CD4-positive, alpha-beta memory T cell (primary cell): ENCODE measurements at regions of chr20 and their contacts with region 1.

Region 1: DNA sequence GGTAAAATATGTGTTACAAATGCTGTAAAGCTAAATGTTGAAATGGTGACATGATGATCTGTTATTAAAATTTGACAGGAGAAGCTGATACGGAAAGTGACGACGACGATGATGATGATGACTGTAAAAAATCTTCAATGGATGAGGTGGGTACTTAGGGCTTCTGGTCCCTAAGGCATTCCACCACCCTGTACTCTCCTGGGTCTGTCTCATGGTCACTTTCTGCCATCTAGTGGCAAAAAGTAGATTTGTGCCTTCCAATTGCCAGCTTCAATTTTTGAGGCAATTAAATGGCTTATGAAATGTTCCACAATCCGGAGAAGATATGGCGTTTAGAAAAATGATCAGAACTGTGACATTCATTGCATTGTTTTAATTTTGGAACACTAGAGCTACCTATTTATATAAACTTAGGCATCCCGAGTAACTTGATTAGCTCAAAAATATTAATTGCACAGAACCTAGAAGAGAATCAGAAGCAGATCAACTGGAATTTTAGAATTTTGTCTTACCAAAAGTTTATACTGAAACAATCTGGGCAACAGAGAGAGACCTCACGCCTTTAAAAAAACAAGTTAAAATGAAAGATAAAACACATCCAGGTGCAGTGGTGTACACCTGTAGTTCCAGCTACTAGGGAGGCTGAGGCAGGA is 346.5 kb upstream of the PLCB4 start:
- DNase-seq: peak; percentile 26 to 41 (median 34)
- H3K4me3 ChIP-seq: no peak overlapping the region
- H3K4me3 Mint-ChIP-seq: no peak overlapping the region
- H3K27ac ChIP-seq: no peak overlapping the region
- H3K27ac Mint-ChIP-seq: no peak overlapping the region
- H3K4me1 ChIP-seq: no peaks in the 10 kb centered on the region
- H3K4me1 Mint-ChIP-seq: no peaks in the 10 kb centered on the region
- H3K27me3 ChIP-seq: no peaks in the 10 kb centered on the region
- H3K27me3 Mint-ChIP-seq: no peaks in the 10 kb centered on the region

Region 2: GRCh38 chr20:6828794-6829423 is 1893.5 kb before region 1 on chr20:
- CTCF ChIA-PET with region 1: interaction called, 4 read pairs
- POLR2A ChIA-PET with region 1: no interaction called
- intact Hi-C with region 1: loop called (anchors 5 kb)
- DNase-seq: peak in 1 of 5 donors; percentile 3
- H3K4me3 ChIP-seq: no peak overlapping the region
- H3K4me3 Mint-ChIP-seq: no peak overlapping the region
- H3K27ac ChIP-seq: no peak overlapping the region
- H3K27ac Mint-ChIP-seq: no peak overlapping the region
- H3K4me1 ChIP-seq: no peaks in the 10 kb centered on the region
- H3K4me1 Mint-ChIP-seq: no peaks in the 10 kb centered on the region
- H3K27me3 ChIP-seq: no peaks in the 10 kb centered on the region
- H3K27me3 Mint-ChIP-seq: no peaks in the 10 kb centered on the region

Region 3: GRCh38 chr20:7980332-7981046 is 741.9 kb before region 1 on chr20:
- CTCF ChIA-PET with region 1: interaction called, 11 read pairs
- POLR2A ChIA-PET with region 1: no interaction called
- intact Hi-C with region 1: loop called (anchors 2 kb)
- DNase-seq: peak in 3 of 5 donors; percentile 2 to 8 (median 2)
- H3K4me3 ChIP-seq: no peak overlapping the region
- H3K4me3 Mint-ChIP-seq: no peak overlapping the region
- H3K27ac ChIP-seq: no peak overlapping the region
- H3K27ac Mint-ChIP-seq: peak overlapping the region in 6 of 7 donors; percentile 0 to 86 (median 43)
- H3K4me1 ChIP-seq: no peaks in the 10 kb centered on the region
- H3K4me1 Mint-ChIP-seq: peaks cover 12 to 23% (median 16%) of the 10 kb centered on the region in 4 donors
- H3K27me3 ChIP-seq: no peaks in the 10 kb centered on the region
- H3K27me3 Mint-ChIP-seq: no peaks in the 10 kb centered on the region

Region 4: GRCh38 chr20:8043687-8044282 is 678.6 kb before region 1 on chr20:
- CTCF ChIA-PET with region 1: interaction called, 52 read pairs
- POLR2A ChIA-PET with region 1: interaction called, 4 read pairs
- intact Hi-C with region 1: loop called (anchors 1 kb)
- DNase-seq: peak; percentile 37 to 70 (median 67)
- H3K4me3 ChIP-seq: no peak overlapping the region
- H3K4me3 Mint-ChIP-seq: peak overlapping the region in 1 of 8 donors; percentile 61
- H3K27ac ChIP-seq: no peak overlapping the region
- H3K27ac Mint-ChIP-seq: no peak overlapping the region
- H3K4me1 ChIP-seq: no peaks in the 10 kb centered on the region
- H3K4me1 Mint-ChIP-seq: peaks cover 0 to 4% (median 3%) of the 10 kb centered on the region in 4 donors
- H3K27me3 ChIP-seq: no peaks in the 10 kb centered on the region
- H3K27me3 Mint-ChIP-seq: peaks cover 9 to 11% of the 10 kb centered on the region in 2 donors

Region 5: GRCh38 chr20:8305449-8305978 is 416.9 kb before region 1 on chr20:
- CTCF ChIA-PET with region 1: no interaction called
- POLR2A ChIA-PET with region 1: no interaction called
- intact Hi-C with region 1: loop called (anchors 5 kb)
- DNase-seq: peak; percentile 71 to 79 (median 73)
- H3K4me3 ChIP-seq: no peak overlapping the region
- H3K4me3 Mint-ChIP-seq: peak overlapping the region in 3 of 8 donors; percentile 1 to 31 (median 13)
- H3K27ac ChIP-seq: no peak overlapping the region
- H3K27ac Mint-ChIP-seq: peak overlapping the region in 5 of 7 donors; percentile 3 to 67 (median 47)
- H3K4me1 ChIP-seq: no peaks in the 10 kb centered on the region
- H3K4me1 Mint-ChIP-seq: peaks cover 3 to 12% (median 7%) of the 10 kb centered on the region in 4 donors
- H3K27me3 ChIP-seq: no peaks in the 10 kb centered on the region
- H3K27me3 Mint-ChIP-seq: no peaks in the 10 kb centered on the region

Region 6: GRCh38 chr20:8735674-8736073 is 13.3 kb after region 1 on chr20:
- CTCF ChIA-PET with region 1: interaction called, 26 read pairs
- POLR2A ChIA-PET with region 1: no interaction called
- intact Hi-C with region 1: no loop called
- DNase-seq: no peak
- H3K4me3 ChIP-seq: no peak overlapping the region
- H3K4me3 Mint-ChIP-seq: no peak overlapping the region
- H3K27ac ChIP-seq: no peak overlapping the region
- H3K27ac Mint-ChIP-seq: no peak overlapping the region
- H3K4me1 ChIP-seq: no peaks in the 10 kb centered on the region
- H3K4me1 Mint-ChIP-seq: no peaks in the 10 kb centered on the region
- H3K27me3 ChIP-seq: no peaks in the 10 kb centered on the region
- H3K27me3 Mint-ChIP-seq: no peaks in the 10 kb centered on the region